Esophagus squamous epithelium (tissue), 5 donors: ENCODE measurements at regions of chr5 and their contacts with region 1.

Region 1: GRCh38 chr5:88883059-88883835 is at the start of gene MEF2C:
- DNase-seq: peak; percentile 21
- H3K4me3 ChIP-seq: peak within 1 kb of the TSS; percentile 34 to 67 (median 60)
- H3K27ac ChIP-seq: peak within 1 kb of the TSS; percentile 71 to 95 (median 91)
- H3K4me1 ChIP-seq: peaks cover 0 to 37% (median 3%) of the 10 kb centered on the region in 3 donors
- H3K27me3 ChIP-seq: peaks cover 0 to 8% (median 0%) of the 10 kb centered on the region in 4 donors
- CTCF ChIP-seq: no peak
- POLR2A ChIP-seq: peak in 2 of 4 donors; percentile 72 to 82
- total RNA-seq, gene MEF2C: 3.1 to 17.5 (median 9.9) TPM

Region 2: DNA sequence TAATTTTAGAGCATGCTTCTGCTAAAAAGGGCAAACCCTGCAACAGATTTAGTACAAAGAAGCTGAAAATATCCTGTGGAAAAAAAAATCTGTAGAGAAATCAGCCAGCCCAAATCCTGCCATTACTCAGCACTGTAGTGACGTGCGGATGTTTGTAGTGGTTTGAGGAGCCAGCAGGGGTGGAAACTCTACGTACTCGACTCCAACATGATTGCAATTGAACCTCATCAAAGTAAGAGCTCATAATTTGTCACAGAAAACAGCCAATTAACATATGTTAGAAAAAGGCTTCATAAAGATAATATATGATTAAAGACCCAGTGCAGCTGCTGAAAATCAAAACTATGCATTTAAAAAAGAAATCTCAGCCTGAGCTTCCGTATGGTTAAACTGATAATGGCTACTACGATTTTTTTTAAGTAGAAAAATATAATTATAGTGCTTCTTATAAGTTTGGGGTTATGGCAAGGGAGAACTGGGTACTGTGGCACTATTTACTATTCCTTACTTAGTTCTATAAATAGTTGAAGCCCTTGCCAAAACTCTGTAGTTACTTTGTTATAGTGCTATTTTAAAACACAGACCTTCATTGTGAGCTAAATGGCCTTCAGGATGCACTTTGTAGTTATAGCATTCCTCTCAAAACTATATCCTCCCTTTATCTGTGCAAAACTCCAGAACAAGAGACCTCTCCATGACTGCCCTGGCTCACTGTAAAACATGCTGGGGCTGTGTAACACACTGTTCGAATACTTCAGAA is 49.7 kb before region 1 on chr5:
- intact Hi-C with region 1: loop called (anchors 10 kb)
- DNase-seq: no peak
- H3K4me3 ChIP-seq: peak overlapping the region in 1 of 4 donors; percentile 12
- H3K27ac ChIP-seq: peak overlapping the region in 3 of 4 donors; percentile 70 to 75 (median 74)
- H3K4me1 ChIP-seq: peaks cover 0 to 48% (median 5%) of the 10 kb centered on the region in 3 donors
- H3K27me3 ChIP-seq: no peaks in the 10 kb centered on the region
- CTCF ChIP-seq: no peak
- POLR2A ChIP-seq: no peak

Region 3: DNA sequence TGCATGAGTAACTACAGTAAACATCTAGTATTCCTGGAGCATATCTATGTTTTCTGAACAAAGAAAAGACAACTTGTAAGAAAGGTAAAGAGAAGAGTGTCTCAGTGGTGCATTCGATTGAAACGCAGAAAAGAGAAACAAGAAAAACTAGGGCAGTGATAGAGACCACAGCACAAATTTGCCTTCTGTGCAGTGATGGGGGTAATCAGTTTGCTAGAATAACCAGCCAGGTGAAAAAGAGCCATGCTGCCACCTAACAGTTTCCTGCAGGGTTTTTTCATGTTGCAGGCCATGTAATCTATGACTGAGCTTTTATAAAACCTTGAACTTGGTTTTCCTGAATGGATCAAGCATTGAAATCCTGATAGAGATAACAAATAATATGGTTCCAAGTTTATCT is 198.1 kb after region 1 on chr5:
- intact Hi-C with region 1: no loop called
- DNase-seq: no peak
- H3K4me3 ChIP-seq: no peak overlapping the region
- H3K27ac ChIP-seq: no peak overlapping the region
- H3K4me1 ChIP-seq: no peaks in the 10 kb centered on the region
- H3K27me3 ChIP-seq: no peaks in the 10 kb centered on the region
- CTCF ChIP-seq: no peak
- POLR2A ChIP-seq: no peak